ENCODE measurements at regions of chr11 and their contacts with region 1.

Region 1: DNA sequence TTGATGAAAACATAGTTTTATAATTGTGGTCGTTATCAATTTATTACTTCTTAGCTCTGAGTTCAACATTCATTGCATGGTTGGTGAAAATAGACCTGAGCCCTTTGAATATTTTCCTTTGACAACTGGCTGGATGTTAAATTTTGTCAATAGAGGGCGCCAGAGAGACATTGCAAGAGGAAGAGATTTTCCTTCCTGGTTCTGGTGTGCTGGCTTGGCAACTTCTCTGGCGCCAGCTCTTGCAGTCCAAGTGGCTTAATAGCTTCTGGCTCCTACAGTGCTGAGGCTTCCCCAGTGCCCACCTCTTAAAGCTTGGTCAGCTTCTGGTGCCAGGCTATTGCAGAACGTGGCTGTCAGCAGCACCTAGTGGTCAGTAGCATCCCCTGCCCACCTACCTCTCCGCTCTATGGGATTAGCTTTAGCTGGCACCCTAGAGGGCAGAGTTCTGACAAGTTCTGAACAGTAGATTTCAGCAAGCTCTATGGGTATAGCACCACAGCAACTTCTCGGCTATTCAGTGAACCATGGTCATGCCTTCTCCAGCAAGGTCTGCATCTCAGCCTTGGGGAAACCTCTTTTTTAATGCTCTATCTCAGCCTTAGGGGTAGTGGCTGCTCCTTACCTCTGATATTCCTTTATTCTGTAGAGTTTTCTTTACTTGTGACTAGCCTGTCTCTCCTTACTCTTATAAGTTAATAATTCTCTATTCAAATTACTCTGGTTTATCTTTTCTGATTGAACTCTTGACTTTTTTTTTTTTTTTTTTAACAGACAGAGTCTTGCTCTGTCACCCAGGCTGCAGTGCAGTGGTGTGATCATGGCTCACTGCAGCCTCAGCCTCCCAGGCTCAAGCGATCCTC is 59.4 kb downstream of the ACER3 start:
- DNase-seq: peak; percentile 65 to 80 (median 76)
- ATAC-seq: peak; percentile 89 to 94 (median 90)
- H3K4me3 ChIP-seq: peak overlapping the region in 1 of 3 donors; percentile 33
- H3K27ac ChIP-seq: no peak overlapping the region
- H3K4me1 ChIP-seq: peaks cover 0 to 21% (median 2%) of the 10 kb centered on the region in 4 donors
- H3K27me3 ChIP-seq: no peaks in the 10 kb centered on the region
- CTCF ChIP-seq: peak; percentile 88 to 91 (median 91)
- POLR2A ChIP-seq: no peak

Region 2: DNA sequence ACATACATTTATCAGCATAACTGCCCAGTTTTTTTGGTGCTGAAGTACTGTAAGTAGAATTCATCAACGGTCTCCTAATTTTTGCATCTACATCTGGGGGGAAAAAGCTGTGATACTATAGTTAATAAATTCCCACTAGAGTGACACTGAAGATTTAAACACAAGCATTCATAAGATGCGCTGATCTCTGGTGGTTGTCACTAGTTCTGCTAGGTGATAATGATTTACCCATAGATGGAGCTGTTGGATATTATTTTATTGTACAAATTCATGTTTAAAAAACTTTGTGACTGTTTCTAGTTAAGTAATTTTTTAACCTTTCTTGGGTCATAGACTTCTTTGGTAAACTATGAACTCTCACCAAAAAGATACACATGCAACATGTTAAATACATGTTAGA is 368.7 kb before region 1 on chr11:
- intact Hi-C with region 1: no loop called
- DNase-seq: no peak
- ATAC-seq: peak in 1 of 4 donors; percentile 23
- H3K4me3 ChIP-seq: no peak overlapping the region
- H3K27ac ChIP-seq: no peak overlapping the region
- H3K4me1 ChIP-seq: no peaks in the 10 kb centered on the region
- H3K27me3 ChIP-seq: no peaks in the 10 kb centered on the region
- CTCF ChIP-seq: peak; percentile 14 to 30 (median 17)
- POLR2A ChIP-seq: no peak

Region 3: DNA sequence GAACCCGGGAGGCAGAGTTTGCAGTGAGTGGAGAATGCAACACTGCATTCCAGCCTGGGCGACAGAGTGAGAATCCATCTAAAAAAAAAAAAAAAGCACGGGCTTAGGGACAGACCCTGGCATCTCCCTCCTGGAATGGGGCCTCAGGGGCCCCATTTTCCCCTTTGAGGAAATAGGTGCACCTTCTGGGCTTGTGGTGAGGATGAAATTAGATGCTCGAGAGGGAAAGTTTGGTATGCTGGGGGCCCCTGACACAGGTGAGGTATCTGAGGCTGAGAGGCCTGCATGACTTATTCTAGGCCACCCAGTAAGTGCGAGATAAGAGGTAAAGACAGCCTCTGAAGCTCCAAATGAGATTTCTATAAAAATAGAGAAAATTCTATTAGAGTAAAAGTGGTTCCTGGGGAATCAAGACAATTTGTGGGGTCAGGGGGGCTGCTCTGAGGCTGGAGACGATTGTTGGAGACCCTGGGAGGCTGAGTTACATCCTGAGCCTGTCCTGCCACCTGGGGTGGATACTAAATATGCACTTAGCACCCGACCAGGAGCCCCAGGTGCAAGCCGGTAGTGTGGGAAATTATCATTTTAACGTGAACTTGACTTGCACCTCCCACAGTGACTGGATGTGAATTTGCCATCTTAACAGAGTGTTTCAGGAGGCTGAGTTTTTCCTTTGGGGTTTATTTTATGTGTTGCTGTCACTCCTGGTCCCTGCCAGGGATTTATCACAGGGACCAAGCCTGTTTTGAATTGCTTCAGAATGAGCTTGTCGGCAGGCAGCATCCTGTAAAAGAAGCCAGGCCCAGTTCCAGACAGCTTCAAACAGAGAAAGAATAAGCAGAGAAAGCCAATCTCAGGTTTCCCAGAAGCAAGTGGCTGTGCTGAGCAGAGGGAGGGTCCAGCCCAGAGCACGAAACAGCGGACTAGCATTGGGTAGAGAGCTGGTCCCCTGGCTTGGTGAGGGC is 185.4 kb before region 1 on chr11:
- intact Hi-C with region 1: loop called (anchors 5 to 10 kb)
- DNase-seq: no peak
- ATAC-seq: no peak
- H3K4me3 ChIP-seq: no peak overlapping the region
- H3K27ac ChIP-seq: no peak overlapping the region
- H3K4me1 ChIP-seq: peaks cover 0 to 16% (median 0%) of the 10 kb centered on the region in 4 donors
- H3K27me3 ChIP-seq: no peaks in the 10 kb centered on the region
- CTCF ChIP-seq: no peak
- POLR2A ChIP-seq: no peak

Region 4: GRCh38 chr11:76807206-76807875 is 112.8 kb before region 1 on chr11:
- intact Hi-C with region 1: loop called in 1 of 2 experiments (anchors 10 kb)
- DNase-seq: peak; percentile 82 to 88 (median 85)
- ATAC-seq: peak; percentile 66 to 77 (median 74)
- H3K4me3 ChIP-seq: no peak overlapping the region
- H3K27ac ChIP-seq: peak overlapping the region in 1 of 3 donors; percentile 12
- H3K4me1 ChIP-seq: peaks cover 0 to 24% (median 9%) of the 10 kb centered on the region in 4 donors
- H3K27me3 ChIP-seq: no peaks in the 10 kb centered on the region
- CTCF ChIP-seq: peak; percentile 63 to 85 (median 76)
- POLR2A ChIP-seq: no peak

Region 5: DNA sequence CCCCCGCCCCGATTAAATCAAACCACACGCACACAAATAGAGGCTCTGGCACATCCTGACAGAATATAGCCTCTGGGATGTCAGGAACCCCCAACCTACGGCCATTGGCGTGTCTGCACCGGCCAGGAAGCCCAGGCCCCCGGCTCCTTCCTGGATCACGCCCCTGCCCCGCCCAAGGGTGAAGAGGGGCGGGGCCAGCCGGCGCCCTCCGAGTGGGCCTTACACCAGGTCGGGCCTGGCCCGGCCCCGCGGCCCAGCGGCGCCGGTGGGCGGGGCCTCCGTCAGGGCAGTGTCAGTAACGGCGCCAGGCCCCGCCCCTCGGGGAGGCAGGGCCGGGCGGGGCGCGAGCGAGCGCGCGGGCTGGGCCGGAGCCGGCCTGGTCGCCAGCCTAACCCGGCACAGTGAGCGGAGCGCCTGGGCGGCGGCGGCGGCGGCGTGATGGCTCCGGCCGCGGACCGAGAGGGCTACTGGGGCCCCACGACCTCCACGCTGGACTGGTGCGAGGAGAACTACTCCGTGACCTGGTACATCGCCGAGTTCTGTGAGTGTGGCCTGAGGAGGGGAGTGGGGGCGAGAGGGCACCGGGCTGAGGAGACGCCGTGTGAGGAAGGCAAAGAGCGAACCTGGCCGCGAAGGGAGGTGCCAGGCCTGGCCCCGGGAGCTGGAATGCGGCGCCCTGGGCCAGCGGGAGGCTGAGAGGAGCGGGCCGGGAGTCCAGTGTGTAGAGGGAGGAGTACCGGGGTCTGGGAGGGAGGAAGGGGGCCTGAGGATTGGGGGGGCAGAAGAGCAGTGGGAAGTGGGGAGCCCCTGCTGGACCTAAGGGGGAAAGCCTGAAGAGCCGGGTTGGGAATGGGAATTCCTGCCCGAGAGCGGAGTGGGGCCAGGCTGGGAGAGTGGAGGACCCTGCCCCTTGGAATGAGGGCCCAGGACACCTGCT is 59.3 kb before region 1 on chr11 and contains the start of gene ACER3:
- intact Hi-C with region 1: loop called in 1 of 2 experiments (anchors 10 kb)
- DNase-seq: peak; percentile 94 to 97 (median 95)
- ATAC-seq: peak; percentile 95 to 99 (median 98)
- H3K4me3 ChIP-seq: peak within 1 kb of the TSS; percentile 59 to 70 (median 69)
- H3K27ac ChIP-seq: peak within 1 kb of the TSS; percentile 73 to 76 (median 76)
- H3K4me1 ChIP-seq: peaks cover 0 to 10% (median 1%) of the 10 kb centered on the region in 4 donors
- H3K27me3 ChIP-seq: no peaks in the 10 kb centered on the region
- CTCF ChIP-seq: no peak
- POLR2A ChIP-seq: peak; percentile 98
- total RNA-seq, gene ACER3: 5.1 to 11.6 (median 7.3) TPM

Region 6: GRCh38 chr11:76978818-76979217 is 58.7 kb after region 1 on chr11:
- intact Hi-C with region 1: no loop called
- DNase-seq: no peak
- ATAC-seq: no peak
- H3K4me3 ChIP-seq: no peak overlapping the region
- H3K27ac ChIP-seq: no peak overlapping the region
- H3K4me1 ChIP-seq: no peaks in the 10 kb centered on the region
- H3K27me3 ChIP-seq: no peaks in the 10 kb centered on the region
- CTCF ChIP-seq: no peak
- POLR2A ChIP-seq: no peak

Region 7: GRCh38 chr11:77047007-77047927 is 127.2 kb after region 1 on chr11:
- intact Hi-C with region 1: loop called in 1 of 2 experiments (anchors 10 kb)
- DNase-seq: peak in 1 of 3 donors; percentile 85
- ATAC-seq: peak; percentile 86 to 88 (median 86)
- H3K4me3 ChIP-seq: peak overlapping the region; percentile 27 to 45 (median 42)
- H3K27ac ChIP-seq: peak overlapping the region; percentile 12 to 58 (median 38)
- H3K4me1 ChIP-seq: no peaks in the 10 kb centered on the region
- H3K27me3 ChIP-seq: no peaks in the 10 kb centered on the region
- CTCF ChIP-seq: peak; percentile 70 to 78 (median 76)
- POLR2A ChIP-seq: no peak

Region 8: GRCh38 chr11:77091146-77091940 is 171.2 kb after region 1 on chr11:
- intact Hi-C with region 1: no loop called
- DNase-seq: peak; percentile 82 to 83 (median 82)
- ATAC-seq: peak; percentile 54 to 61 (median 58)
- H3K4me3 ChIP-seq: no peak overlapping the region
- H3K27ac ChIP-seq: no peak overlapping the region
- H3K4me1 ChIP-seq: peaks cover 0 to 53% (median 24%) of the 10 kb centered on the region in 4 donors
- H3K27me3 ChIP-seq: no peaks in the 10 kb centered on the region
- CTCF ChIP-seq: peak; percentile 88 to 98 (median 90)
- POLR2A ChIP-seq: no peak